Heart right ventricle (tissue), 16 donors: ENCODE measurements at regions of chr19 and their contacts with region 1.

Region 1: DNA sequence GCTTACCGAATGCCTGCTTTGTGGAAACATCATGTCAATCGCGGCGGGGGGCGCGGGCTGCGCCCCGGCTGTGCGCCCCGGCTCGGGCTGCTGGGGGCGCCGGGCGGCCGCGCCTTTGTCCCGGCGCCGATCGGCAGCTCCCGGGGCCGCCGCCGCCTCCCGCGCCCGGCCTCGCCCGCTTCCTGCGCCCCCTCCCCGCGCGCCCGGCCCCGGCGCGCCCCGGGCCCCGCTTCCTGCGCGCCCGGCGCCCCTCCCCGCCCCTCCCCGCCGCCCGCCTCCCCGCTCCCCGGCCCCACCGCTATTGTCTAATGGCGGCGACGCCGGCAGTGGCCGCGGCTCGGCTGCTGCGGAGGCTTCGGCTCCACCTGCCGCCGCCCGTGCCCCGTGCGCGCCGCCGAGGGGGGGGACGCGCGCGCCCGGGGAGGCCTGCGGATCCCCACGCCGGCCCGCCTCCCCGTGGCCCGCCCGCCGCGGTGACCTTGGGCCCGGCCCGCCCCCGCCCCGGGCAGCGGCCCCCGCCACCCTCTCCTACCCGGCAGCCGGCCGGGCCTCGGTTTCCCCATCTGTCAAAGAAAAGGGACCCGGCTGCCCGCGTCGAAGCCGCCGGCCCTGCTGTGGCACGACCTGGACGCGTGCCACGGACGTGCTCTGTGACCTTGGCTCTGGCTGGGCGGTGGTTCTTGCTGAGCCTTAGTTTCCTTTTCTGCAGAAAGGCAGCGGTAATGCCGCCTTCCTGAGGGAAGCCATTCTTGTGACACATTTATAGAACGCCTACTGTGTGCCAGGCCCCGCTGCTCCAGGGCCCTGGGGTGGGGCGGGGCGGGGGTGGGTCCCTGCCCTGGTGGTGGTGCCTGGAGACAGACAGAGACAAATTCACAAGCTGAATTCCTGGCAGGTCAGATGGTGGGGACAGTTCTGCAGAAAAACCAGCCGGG is at the start of gene TLE5:
- DNase-seq: peak; percentile 67 to 79
- ATAC-seq: peak; percentile 25 to 77 (median 55)
- H3K4me3 ChIP-seq: peak within 1 kb of the TSS; percentile 68 to 98 (median 86)
- H3K27ac ChIP-seq: peak within 1 kb of the TSS; percentile 96 to 100 (median 99)
- H3K4me1 ChIP-seq: peaks cover 9 to 50% (median 47%) of the 10 kb centered on the region in 9 donors
- H3K27me3 ChIP-seq: no peaks in the 10 kb centered on the region
- CTCF ChIP-seq: peak in 2 of 9 donors; percentile 5 to 21
- total RNA-seq, gene TLE5: 653 to 857 (median 758) TPM

Region 2: DNA sequence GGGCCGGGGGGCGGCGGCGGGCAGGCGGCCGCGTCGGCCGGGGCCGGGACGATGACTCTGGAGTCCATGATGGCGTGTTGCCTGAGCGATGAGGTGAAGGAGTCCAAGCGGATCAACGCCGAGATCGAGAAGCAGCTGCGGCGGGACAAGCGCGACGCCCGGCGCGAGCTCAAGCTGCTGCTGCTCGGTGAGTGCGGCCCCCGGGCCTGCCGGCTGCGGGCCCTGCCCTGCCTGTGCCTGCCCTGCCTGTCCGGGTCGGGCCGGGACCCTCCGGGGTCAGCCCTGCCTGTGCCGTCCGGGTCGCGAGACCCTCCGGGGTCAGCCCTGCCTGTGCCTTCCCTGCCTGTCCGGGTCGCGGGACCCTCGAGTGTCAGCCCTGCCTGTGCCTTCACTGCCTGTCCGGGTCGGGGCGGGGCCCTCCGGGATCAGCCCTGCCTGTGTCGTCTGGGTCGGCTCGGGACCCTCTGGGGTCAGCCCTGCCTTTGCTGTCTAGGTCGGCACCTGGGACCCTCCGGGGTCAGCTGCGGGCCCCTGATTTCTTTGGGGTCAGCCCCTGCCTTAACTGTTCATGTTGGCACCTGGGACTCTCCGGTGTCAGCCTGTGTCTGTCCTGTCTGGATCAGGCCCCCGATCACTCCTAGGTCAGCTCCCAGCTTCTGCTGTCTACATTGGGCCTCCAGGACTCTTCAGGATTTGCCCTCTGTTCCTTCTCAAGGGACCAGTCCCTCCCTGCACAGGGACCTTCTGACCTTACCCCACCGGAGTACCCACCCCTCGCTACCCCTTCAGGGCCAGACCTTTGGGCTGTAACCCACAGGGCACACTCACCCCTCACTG is 32.4 kb after region 1 on chr19:
- intact Hi-C with region 1: loop called in 6 of 10 experiments (anchors 1 to 5 kb)
- DNase-seq: no peak
- ATAC-seq: no peak
- H3K4me3 ChIP-seq: peak overlapping the region; percentile 86 to 100 (median 98)
- H3K27ac ChIP-seq: peak overlapping the region; percentile 5 to 95 (median 90)
- H3K4me1 ChIP-seq: peaks cover 29 to 51% (median 47%) of the 10 kb centered on the region in 9 donors
- H3K27me3 ChIP-seq: peaks cover 0 to 32% (median 0%) of the 10 kb centered on the region in 7 donors
- CTCF ChIP-seq: no peak

Region 3: GRCh38 chr19:3100081-3100864 is 37.8 kb after region 1 on chr19:
- intact Hi-C with region 1: loop called in 5 of 10 experiments (anchors 2 to 5 kb)
- DNase-seq: peak in 1 of 2 donors; percentile 7
- ATAC-seq: no peak
- H3K4me3 ChIP-seq: peak overlapping the region in 1 of 10 donors; percentile 98
- H3K27ac ChIP-seq: peak overlapping the region in 9 of 10 donors; percentile 7 to 95 (median 90)
- H3K4me1 ChIP-seq: peaks cover 44 to 99% (median 92%) of the 10 kb centered on the region in 9 donors
- H3K27me3 ChIP-seq: peaks cover 0 to 25% (median 0%) of the 10 kb centered on the region in 7 donors
- CTCF ChIP-seq: no peak

Region 4: DNA sequence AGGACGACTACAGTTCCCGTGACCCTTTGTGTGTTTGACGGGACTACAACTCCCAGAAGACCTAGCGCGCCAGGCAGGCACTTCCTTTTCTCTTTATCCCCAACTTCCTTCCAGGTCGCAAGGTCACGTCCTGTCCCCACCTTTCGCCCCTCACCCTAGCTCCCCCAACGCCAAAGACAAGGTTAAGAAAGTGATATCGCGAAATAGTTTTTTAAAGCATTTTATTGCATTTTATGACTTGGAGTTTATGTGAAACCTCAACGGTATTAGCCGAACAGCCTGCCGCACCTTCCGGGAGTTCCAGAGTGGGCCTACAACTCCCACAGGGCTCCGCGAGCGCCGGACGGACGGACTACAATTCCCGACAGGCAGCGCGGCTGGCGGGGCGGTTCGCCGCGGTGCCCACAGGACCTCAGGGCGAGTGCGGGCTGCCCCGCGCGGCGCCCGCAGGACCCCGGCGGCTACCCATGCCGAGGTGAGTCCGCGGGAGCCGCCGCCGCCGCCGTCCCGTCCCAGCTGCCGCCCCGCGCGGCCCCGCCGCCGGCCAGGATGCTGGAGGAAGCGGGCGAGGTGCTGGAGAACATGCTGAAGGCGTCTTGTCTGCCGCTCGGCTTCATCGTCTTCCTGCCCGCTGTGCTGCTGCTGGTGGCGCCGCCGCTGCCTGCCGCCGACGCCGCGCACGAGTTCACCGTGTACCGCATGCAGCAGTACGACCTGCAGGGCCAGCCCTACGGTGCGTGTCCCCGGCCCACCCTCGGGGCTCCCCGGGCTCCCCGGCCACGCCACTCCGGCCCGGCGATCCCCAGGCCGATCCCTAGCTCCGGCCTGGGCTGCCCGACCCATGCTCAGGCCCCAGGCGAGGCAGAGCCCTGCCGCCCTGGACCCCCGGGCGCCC is 123.3 kb after region 1 on chr19 and contains the start of gene NCLN:
- intact Hi-C with region 1: no loop called
- DNase-seq: peak; percentile 95
- ATAC-seq: peak; percentile 94 to 98 (median 96)
- H3K4me3 ChIP-seq: peak within 1 kb of the TSS; percentile 89 to 100 (median 95)
- H3K27ac ChIP-seq: peak within 1 kb of the TSS; percentile 77 to 95 (median 88)
- H3K4me1 ChIP-seq: peaks cover 5 to 58% (median 23%) of the 10 kb centered on the region in 9 donors
- H3K27me3 ChIP-seq: no peaks in the 10 kb centered on the region
- CTCF ChIP-seq: no peak
- total RNA-seq, gene NCLN: 17.1 to 36.3 (median 24.6) TPM

Region 5: GRCh38 chr19:3360421-3361383 is 298.3 kb after region 1 on chr19:
- intact Hi-C with region 1: no loop called
- DNase-seq: peak; percentile 81 to 84
- ATAC-seq: peak; percentile 56 to 82 (median 72)
- H3K4me3 ChIP-seq: peak overlapping the region; percentile 40 to 100 (median 82)
- H3K27ac ChIP-seq: peak overlapping the region; percentile 88 to 100 (median 96)
- H3K4me1 ChIP-seq: peaks cover 17 to 60% (median 43%) of the 10 kb centered on the region in 9 donors
- H3K27me3 ChIP-seq: peaks cover 0 to 10% (median 0%) of the 10 kb centered on the region in 7 donors
- CTCF ChIP-seq: peak in 5 of 9 donors; percentile 22 to 55 (median 48)